K562 (cell line): ENCODE measurements at regions of chr2 and their contacts with region 1.

Region 1: DNA sequence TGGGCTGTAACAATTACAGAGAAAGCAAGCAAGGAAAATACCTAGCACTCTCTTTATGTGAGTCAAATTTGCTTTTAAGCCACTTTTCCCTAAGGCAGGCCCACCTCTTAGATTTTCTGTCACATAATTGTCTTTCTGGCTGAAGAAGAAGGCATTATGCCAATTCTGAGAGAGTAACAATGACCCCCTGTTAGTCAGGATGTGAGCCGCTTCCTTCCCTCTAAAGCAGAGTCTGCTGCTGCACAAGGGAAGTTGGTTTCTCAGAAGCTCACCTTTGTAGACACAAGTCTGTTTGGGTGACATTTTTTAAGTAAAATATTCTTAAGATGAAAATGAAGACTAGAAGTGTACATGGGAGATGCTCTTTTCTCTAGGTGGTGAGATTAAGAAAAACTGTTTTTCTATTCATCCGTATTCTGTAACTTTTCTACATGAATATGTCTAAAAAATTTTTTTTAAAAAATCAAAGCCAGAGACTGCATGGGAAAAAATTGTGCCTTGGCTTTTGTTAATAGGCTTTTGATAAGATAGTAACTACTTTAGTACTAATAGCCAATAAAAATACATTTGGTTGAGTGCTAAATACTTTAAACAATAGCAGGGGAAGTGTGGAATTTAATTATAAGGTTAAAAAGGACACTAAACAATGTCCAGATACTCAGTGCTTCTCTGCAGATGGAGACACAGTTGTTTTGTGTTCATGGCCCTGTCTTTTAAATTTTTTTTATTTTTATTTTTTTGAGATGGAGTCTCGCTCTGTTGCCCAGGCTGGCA is 33.4 kb upstream of the VPS54 start:
- DNase-seq: no peak
- ATAC-seq: no peak
- H3K4me3 ChIP-seq: no peak overlapping the region
- H3K27ac ChIP-seq: no peak overlapping the region
- H3K4me1 ChIP-seq: no peaks in the 10 kb centered on the region
- H3K27me3 ChIP-seq: no peaks in the 10 kb centered on the region; a peak in 1 of 5 replicates
- CTCF ChIP-seq: no peak
- EP300 ChIP-seq: no peak
- POLR2A ChIP-seq: no peak
- RAD21 ChIP-seq: no peak

Region 2: GRCh38 chr2:64144057-64145013 is 91.7 kb after region 1 on chr2 and contains the start of gene PELI1:
- CTCF ChIA-PET with region 1: no interaction called
- POLR2A ChIA-PET with region 1: no interaction called
- in situ Hi-C with region 1: no loop called
- intact Hi-C with region 1: loop called (anchors 5 kb)
- DNase-seq: peak; percentile 95 to 98 (median 96)
- ATAC-seq: peak; percentile 96
- H3K4me3 ChIP-seq: peak within 1 kb of the TSS; percentile 91
- H3K27ac ChIP-seq: peak within 1 kb of the TSS; percentile 88
- H3K4me1 ChIP-seq: peaks cover 0 to 13% of the 10 kb centered on the region in 2 experiments; a peak in 3 of 5 replicates
- H3K27me3 ChIP-seq: no peaks in the 10 kb centered on the region
- CTCF ChIP-seq: peak; percentile 33 to 61 (median 43); a peak in 4 of 6 replicates
- EP300 ChIP-seq: no peak
- POLR2A ChIP-seq: peak; percentile 88
- RAD21 ChIP-seq: peak; percentile 38 to 51
- polyA plus RNA-seq, gene PELI1: 3.3 to 3.9 TPM

Region 3: DNA sequence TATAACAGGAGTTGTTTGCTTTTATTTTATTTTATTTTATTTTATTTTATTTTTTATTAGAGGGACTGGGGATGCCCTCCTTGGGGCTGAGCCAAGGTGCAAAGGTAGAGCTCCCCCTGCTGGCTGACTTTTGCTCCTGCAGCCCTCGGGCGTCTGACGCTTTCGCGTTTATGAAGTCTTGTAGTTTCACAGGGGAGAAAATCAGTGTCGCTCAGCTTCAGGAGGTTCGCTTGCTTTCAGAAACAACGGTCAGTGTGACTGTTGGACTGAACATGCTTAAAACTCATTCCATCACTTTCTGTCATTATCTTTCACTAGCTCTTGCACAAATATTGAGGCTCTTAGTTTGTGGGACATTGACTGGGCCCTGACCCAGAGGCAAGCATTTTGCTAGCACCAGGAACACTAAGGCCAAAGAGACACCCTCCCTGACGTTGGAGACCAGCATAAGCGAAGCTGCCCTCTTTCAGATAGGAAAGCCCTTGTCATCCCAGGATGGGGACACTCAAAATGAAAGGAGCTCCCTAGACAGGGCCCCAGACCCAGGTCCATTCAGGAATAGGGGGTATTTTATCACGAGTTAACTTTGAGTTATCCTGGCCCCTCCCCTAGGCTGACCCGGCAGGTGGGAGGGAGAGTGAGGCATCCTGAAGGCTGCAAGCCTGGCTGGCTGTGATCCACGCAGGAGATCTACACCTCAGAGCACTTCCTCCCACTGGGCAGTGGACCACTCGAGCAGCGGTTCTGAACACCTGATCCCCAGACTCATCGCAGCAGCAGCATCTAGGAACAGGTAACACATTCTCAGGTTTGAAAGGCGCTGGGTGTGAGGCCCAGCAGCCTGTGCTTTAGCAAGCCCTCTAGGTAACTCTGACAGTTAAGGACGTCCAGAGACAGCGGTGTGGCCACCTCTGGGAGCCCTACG is 435.7 kb after region 1 on chr2:
- CTCF ChIA-PET with region 1: interaction called, 8 read pairs
- POLR2A ChIA-PET with region 1: no interaction called
- in situ Hi-C with region 1: loop called (anchors 10 kb)
- intact Hi-C with region 1: loop called (anchors 2 kb)
- DNase-seq: peak; percentile 68 to 79 (median 78)
- ATAC-seq: peak; percentile 92
- H3K4me3 ChIP-seq: no peak overlapping the region
- H3K27ac ChIP-seq: no peak overlapping the region
- H3K4me1 ChIP-seq: no peaks in the 10 kb centered on the region
- H3K27me3 ChIP-seq: peaks cover 15 to 36% of the 10 kb centered on the region in 2 experiments
- CTCF ChIP-seq: peak; percentile 80 to 91 (median 86)
- EP300 ChIP-seq: no peak
- POLR2A ChIP-seq: no peak
- RAD21 ChIP-seq: peak; percentile 77 to 92